PC-9 (cell line): ENCODE measurements at regions of chr20 and their contacts with region 1.

Region 1: DNA sequence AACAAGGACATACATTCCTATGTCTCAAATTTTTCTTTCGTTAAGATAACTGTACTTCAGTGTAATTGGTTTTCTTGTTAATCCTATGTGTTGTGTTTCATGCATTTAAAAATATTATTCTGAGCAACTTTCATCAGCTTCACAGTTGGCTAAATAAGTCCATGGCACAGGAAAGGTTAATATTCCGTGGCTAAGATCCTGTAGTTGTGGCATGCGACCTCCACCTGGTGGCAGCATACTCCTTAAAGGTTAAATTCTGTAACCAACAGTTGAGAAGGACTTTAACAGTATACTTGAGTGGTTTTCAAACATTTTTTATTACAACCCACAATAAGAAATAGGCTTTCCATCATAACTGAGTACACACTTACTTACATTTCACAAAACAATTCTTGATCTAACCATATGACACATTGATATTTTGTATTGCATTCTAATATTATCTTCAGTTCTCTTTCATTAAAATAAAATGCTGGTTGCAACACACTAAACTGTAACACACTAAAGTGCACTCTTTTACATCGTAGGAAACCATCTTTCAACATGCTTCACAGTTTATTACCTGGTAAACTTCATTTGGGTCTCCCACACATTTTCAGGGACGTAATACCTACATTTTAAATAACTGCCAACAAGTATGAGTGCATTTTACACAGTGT is 118.3 kb downstream of the SLX4IP start:
- DNase-seq: peak; percentile 51 to 60
- H3K4me3 ChIP-seq: no peak overlapping the region
- H3K27ac ChIP-seq: no peak overlapping the region
- H3K4me1 ChIP-seq: peaks cover 29% of the 10 kb centered on the region
- H3K27me3 ChIP-seq: no peaks in the 10 kb centered on the region
- CTCF ChIP-seq: peak; percentile 87

Region 2: GRCh38 chr20:10603971-10604864 is 50.8 kb after region 1 on chr20:
- CTCF ChIA-PET with region 1: no interaction called
- POLR2A ChIA-PET with region 1: interaction called, 20 read pairs
- intact Hi-C with region 1: loop called (anchors 2 kb)
- DNase-seq: peak; percentile 63 to 84
- H3K4me3 ChIP-seq: no peak overlapping the region
- H3K27ac ChIP-seq: peak overlapping the region; percentile 87
- H3K4me1 ChIP-seq: peaks cover 34% of the 10 kb centered on the region
- H3K27me3 ChIP-seq: no peaks in the 10 kb centered on the region
- CTCF ChIP-seq: no peak

Region 3: DNA sequence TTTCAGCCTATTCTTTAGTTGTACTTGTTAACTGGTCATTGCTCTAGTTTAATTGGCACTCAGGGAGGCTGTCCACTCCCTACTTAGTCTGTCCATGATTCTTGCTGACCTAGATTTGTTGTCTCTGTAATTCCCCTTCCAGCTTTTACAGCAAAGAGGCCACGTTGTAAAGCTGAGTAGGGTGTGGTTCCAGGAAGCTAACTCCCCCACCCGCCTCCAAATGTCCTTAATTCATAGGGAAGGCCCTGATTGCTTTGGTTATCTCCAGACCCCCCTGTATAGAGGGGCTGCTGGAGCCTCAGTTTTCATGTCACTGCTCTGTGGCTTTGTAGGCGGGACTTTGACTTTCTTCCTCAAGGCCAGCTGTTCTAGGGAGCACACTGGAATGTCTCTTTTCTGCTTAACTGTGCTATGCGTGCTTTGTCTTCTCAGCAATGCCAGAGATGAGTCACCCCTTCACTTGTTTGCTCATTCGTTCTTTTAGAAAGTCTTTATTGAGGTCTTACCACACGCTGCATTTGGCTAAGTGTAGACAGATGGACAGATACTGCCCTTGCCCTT is 295.4 kb after region 1 on chr20:
- CTCF ChIA-PET with region 1: no interaction called
- POLR2A ChIA-PET with region 1: no interaction called
- intact Hi-C with region 1: no loop called
- DNase-seq: peak; percentile 49 to 71
- H3K4me3 ChIP-seq: no peak overlapping the region
- H3K27ac ChIP-seq: no peak overlapping the region
- H3K4me1 ChIP-seq: peaks cover 10% of the 10 kb centered on the region; the same call in 1 of the 2 replicates
- H3K27me3 ChIP-seq: no peaks in the 10 kb centered on the region
- CTCF ChIP-seq: no peak

Region 4: DNA sequence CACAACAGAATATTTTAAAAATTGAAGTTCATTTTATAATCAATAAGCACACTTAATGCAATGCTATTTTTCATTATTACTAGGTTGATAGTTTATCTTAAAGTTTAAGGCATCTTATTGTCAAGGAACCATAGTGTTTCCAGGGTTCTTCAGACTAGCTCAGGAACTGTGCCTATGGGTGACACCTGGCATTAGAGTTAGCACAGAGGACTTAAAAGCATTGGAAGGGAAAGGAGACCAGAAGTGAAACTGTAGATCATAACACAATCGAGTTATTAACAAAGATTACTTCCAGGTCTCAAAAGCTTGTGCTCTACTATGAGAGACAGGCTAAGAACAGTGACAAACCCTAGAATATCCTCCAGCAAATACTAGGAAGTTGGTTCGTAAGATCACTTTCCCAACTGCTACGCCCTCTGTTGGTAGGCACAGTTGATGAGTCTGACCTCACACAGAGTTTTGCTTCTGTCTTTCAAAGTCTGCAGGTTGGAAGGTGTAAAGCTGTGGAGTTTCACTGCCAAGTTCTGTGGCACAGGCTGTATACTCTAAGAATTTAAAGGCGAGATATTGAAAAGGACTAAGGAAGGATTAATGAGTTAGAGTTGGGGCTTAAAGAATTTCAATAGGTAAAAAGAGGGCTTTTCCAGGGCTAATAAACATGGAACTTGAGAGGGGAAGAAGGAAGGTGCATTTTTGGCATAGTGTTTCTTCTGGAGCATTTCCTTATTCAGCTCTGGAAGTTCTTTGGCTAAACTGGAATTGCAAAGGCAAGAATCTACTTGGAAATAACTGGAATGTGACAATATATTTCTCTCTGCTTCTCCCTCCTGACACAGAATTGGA is 651.7 kb after region 1 on chr20:
- CTCF ChIA-PET with region 1: no interaction called
- POLR2A ChIA-PET with region 1: no interaction called
- intact Hi-C with region 1: loop called (anchors 5 kb)
- DNase-seq: peak in 1 of 2 experiments; percentile 54
- H3K4me3 ChIP-seq: no peak overlapping the region
- H3K27ac ChIP-seq: no peak overlapping the region
- H3K4me1 ChIP-seq: peaks cover 7% of the 10 kb centered on the region; the same call in 1 of the 2 replicates
- H3K27me3 ChIP-seq: no peaks in the 10 kb centered on the region
- CTCF ChIP-seq: peak; percentile 68

Region 5: GRCh38 chr20:11274141-11274594 is 720.7 kb after region 1 on chr20:
- CTCF ChIA-PET with region 1: no interaction called
- POLR2A ChIA-PET with region 1: no interaction called
- intact Hi-C with region 1: loop called (anchors 1 kb)
- DNase-seq: peak; percentile 30 to 61
- H3K4me3 ChIP-seq: no peak overlapping the region
- H3K27ac ChIP-seq: no peak overlapping the region
- H3K4me1 ChIP-seq: peaks cover 3% of the 10 kb centered on the region; the same call in 1 of the 2 replicates
- H3K27me3 ChIP-seq: no peaks in the 10 kb centered on the region
- CTCF ChIP-seq: peak; percentile 76